ENCODE measurements at regions of chr12 and their contacts with region 1.

Region 1: GRCh38 chr12:67943226-67943892 is 45.9 kb upstream of the IFNG-AS1 start:
- DNase-seq: peak; percentile 10 to 76 (median 64)
- ATAC-seq: peak; percentile 81
- H3K4me3 ChIP-seq: no peak overlapping the region
- H3K4me3 Mint-ChIP-seq: no peak overlapping the region
- H3K27ac ChIP-seq: no peak overlapping the region
- H3K27ac Mint-ChIP-seq: no peak overlapping the region
- H3K4me1 ChIP-seq: no peaks in the 10 kb centered on the region
- H3K4me1 Mint-ChIP-seq: peaks cover 0 to 6% (median 0%) of the 10 kb centered on the region in 7 donors
- H3K27me3 ChIP-seq: no peaks in the 10 kb centered on the region
- H3K27me3 Mint-ChIP-seq: peaks cover 0 to 18% (median 0%) of the 10 kb centered on the region in 5 donors

Region 2: GRCh38 chr12:67161322-67161918 is 781.9 kb before region 1 on chr12:
- CTCF ChIA-PET with region 1: no interaction called
- POLR2A ChIA-PET with region 1: no interaction called
- intact Hi-C with region 1: loop called in 1 of 2 experiments (anchors 2 kb)
- DNase-seq: peak in 7 of 9 donors; percentile 8 to 27 (median 21)
- ATAC-seq: no peak
- H3K4me3 ChIP-seq: no peak overlapping the region
- H3K4me3 Mint-ChIP-seq: no peak overlapping the region
- H3K27ac ChIP-seq: no peak overlapping the region
- H3K27ac Mint-ChIP-seq: no peak overlapping the region
- H3K4me1 ChIP-seq: no peaks in the 10 kb centered on the region
- H3K4me1 Mint-ChIP-seq: peaks cover 0 to 3% (median 0%) of the 10 kb centered on the region in 7 donors
- H3K27me3 ChIP-seq: no peaks in the 10 kb centered on the region
- H3K27me3 Mint-ChIP-seq: peaks cover 0 to 6% (median 4%) of the 10 kb centered on the region in 5 donors

Region 3: GRCh38 chr12:67441736-67442346 is 501.5 kb before region 1 on chr12:
- CTCF ChIA-PET with region 1: interaction called, 9 read pairs
- POLR2A ChIA-PET with region 1: no interaction called
- intact Hi-C with region 1: loop called (anchors 1 to 2 kb)
- DNase-seq: peak; percentile 50 to 76 (median 72)
- ATAC-seq: peak; percentile 94
- H3K4me3 ChIP-seq: no peak overlapping the region
- H3K4me3 Mint-ChIP-seq: peak overlapping the region in 9 of 10 donors; percentile 29 to 78 (median 59)
- H3K27ac ChIP-seq: no peak overlapping the region
- H3K27ac Mint-ChIP-seq: peak overlapping the region in 8 of 9 donors; percentile 17 to 93 (median 53)
- H3K4me1 ChIP-seq: peaks cover 5 to 7% of the 10 kb centered on the region in 2 donors
- H3K4me1 Mint-ChIP-seq: peaks cover 8 to 38% (median 34%) of the 10 kb centered on the region in 7 donors
- H3K27me3 ChIP-seq: no peaks in the 10 kb centered on the region
- H3K27me3 Mint-ChIP-seq: peaks cover 0 to 8% (median 0%) of the 10 kb centered on the region in 5 donors

Region 4: DNA sequence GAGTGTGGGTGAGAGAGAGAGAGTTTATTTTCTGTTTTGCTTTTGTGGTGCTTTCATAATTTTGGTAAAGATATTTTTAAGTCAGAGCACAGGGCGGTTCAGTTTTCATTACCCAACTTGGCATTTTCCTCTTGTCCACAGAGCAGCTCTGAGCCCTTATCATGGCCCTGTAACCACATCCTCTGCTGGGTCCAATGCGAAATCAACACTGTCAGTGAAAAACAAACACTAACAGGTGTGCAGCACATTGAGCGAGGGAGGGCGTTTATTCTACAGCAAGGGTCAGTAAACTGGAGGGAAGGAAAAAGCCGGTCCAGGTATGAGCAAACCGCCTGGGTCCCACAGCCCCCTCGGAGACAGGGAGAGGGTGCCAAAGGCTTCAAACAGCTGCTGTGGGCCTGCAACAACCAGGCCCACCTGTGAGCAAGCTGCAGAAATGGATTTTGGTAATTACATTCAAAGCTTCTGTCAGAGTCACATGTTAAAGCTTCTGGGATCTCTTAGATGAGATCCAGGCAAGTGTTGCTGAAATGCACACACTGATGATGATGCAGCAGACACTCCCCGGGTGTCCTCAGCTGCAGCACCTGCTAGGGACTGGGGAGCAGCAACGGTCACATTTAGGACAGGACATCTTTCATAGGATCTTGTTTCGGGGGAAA is 427.5 kb before region 1 on chr12:
- CTCF ChIA-PET with region 1: no interaction called
- POLR2A ChIA-PET with region 1: no interaction called
- intact Hi-C with region 1: loop called (anchors 5 kb)
- DNase-seq: peak in 8 of 9 donors; percentile 11 to 70 (median 50)
- ATAC-seq: peak; percentile 82
- H3K4me3 ChIP-seq: peak overlapping the region; percentile 37
- H3K4me3 Mint-ChIP-seq: peak overlapping the region; percentile 52 to 81 (median 72)
- H3K27ac ChIP-seq: no peak overlapping the region
- H3K27ac Mint-ChIP-seq: peak overlapping the region; percentile 40 to 90 (median 79)
- H3K4me1 ChIP-seq: peaks cover 34 to 39% of the 10 kb centered on the region in 2 donors
- H3K4me1 Mint-ChIP-seq: peaks cover 36 to 65% (median 54%) of the 10 kb centered on the region in 7 donors
- H3K27me3 ChIP-seq: no peaks in the 10 kb centered on the region
- H3K27me3 Mint-ChIP-seq: peaks cover 0 to 15% (median 0%) of the 10 kb centered on the region in 5 donors

Region 5: DNA sequence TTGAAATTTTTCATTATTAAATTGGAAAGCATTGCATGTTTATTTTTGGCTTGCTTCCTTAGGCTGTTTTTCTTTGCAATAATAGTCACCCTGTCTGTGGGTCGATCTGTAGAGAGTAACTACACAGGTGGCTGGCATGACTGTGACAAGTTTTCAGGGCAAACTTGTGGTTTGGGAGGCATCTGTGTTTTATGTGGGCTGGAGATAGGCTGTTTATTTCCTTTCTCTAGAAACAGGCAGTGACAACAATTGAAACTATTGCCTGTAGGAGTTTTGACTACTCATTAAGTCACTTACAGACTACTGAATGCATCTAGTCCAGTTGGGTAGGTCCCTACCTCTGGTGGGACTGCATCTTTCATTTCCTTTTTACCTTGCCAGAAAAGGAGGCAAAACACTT is 139.2 kb before region 1 on chr12:
- CTCF ChIA-PET with region 1: no interaction called
- POLR2A ChIA-PET with region 1: no interaction called
- intact Hi-C with region 1: loop called in 1 of 2 experiments (anchors 5 kb)
- DNase-seq: peak in 8 of 9 donors; percentile 29 to 87 (median 62)
- ATAC-seq: peak; percentile 93
- H3K4me3 ChIP-seq: no peak overlapping the region
- H3K4me3 Mint-ChIP-seq: no peak overlapping the region
- H3K27ac ChIP-seq: no peak overlapping the region
- H3K27ac Mint-ChIP-seq: no peak overlapping the region
- H3K4me1 ChIP-seq: peaks cover 18 to 28% of the 10 kb centered on the region in 2 donors
- H3K4me1 Mint-ChIP-seq: peaks cover 4 to 24% (median 7%) of the 10 kb centered on the region in 7 donors
- H3K27me3 ChIP-seq: no peaks in the 10 kb centered on the region
- H3K27me3 Mint-ChIP-seq: peaks cover 0 to under 1% (median 0%) of the 10 kb centered on the region in 5 donors